Naive thymus-derived CD4-positive, alpha-beta T cell (primary cell): ENCODE measurements at regions of chr7 and their contacts with region 1.

Region 1: DNA sequence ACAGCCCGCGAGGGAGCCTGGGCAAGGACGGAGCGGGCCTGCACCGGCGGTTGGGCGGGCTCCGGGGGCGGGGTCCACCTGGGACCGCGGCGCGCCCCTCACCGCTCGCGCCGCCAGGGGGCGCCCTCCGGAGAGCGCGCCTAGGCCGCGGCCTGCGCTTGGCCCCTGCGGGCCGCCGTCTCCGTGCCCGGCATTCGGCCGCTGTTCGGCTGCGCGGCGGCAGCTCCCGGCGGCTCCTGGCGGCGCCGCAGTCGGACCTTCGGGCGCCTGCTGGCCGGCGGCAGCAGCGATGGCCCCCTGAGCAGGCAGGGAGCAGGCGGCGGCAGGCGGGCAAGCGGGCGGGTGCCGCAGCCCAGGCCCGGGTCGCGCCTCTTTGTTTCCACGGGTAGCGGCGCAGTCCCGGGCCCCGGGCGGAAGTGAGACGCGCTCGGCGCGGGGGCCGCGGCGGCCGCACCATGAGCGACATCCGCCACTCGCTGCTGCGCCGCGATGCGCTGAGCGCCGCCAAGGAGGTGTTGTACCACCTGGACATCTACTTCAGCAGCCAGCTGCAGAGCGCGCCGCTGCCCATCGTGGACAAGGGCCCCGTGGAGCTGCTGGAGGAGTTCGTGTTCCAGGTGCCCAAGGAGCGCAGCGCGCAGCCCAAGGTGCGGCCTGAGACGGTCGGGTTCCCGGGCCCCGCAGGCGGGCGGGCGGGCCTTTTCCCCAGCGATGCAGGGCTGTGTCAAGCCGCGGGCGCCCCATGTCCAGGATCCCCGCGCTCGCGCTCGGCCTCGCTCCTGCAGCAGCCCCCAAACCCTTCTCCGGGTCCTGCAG is at the start of gene INTS15:
- DNase-seq: peak; percentile 72 to 95 (median 92)
- ATAC-seq: peak; percentile 98
- H3K4me3 ChIP-seq: peak within 1 kb of the TSS; percentile 77
- H3K4me3 Mint-ChIP-seq: peak within 1 kb of the TSS; percentile 88 to 98 (median 94)
- H3K27ac ChIP-seq: peak within 1 kb of the TSS; percentile 88
- H3K27ac Mint-ChIP-seq: peak within 1 kb of the TSS; percentile 90 to 97 (median 94)
- H3K4me1 ChIP-seq: peaks cover 14 to 19% of the 10 kb centered on the region in 2 donors
- H3K4me1 Mint-ChIP-seq: peaks cover 10 to 35% (median 18%) of the 10 kb centered on the region in 7 donors
- H3K27me3 ChIP-seq: no peaks in the 10 kb centered on the region
- H3K27me3 Mint-ChIP-seq: no peaks in the 10 kb centered on the region
- total RNA-seq, gene INTS15: 39.9 to 69.1 (median 56.5) TPM

Region 2: DNA sequence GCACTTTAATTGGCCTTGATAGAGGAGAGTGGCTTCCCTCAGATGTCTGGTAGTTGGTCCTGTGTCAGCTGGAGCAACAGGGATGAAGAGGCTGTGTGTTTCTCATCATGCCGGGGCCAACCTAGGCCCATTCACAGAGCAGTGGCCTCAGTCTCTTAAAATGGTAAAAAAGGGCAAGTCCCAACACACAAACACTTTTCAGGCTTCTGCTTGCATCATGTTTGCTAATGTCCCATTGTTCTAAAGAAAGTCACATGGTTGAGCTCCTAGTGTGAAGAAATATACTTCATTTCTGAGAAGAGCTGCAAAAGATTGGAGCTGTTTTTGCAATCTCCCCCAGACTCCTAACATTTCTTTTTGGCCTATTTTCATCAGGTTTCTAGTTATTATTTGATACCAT is 1585.0 kb before region 1 on chr7:
- CTCF ChIA-PET with region 1: no interaction called
- POLR2A ChIA-PET with region 1: no interaction called
- intact Hi-C with region 1: no loop called
- DNase-seq: no peak
- ATAC-seq: no peak
- H3K4me3 ChIP-seq: no peak overlapping the region
- H3K4me3 Mint-ChIP-seq: no peak overlapping the region
- H3K27ac ChIP-seq: no peak overlapping the region
- H3K27ac Mint-ChIP-seq: no peak overlapping the region
- H3K4me1 ChIP-seq: no peaks in the 10 kb centered on the region
- H3K4me1 Mint-ChIP-seq: peaks cover 0 to 6% (median 0%) of the 10 kb centered on the region in 7 donors
- H3K27me3 ChIP-seq: no peaks in the 10 kb centered on the region
- H3K27me3 Mint-ChIP-seq: no peaks in the 10 kb centered on the region

Region 3: DNA sequence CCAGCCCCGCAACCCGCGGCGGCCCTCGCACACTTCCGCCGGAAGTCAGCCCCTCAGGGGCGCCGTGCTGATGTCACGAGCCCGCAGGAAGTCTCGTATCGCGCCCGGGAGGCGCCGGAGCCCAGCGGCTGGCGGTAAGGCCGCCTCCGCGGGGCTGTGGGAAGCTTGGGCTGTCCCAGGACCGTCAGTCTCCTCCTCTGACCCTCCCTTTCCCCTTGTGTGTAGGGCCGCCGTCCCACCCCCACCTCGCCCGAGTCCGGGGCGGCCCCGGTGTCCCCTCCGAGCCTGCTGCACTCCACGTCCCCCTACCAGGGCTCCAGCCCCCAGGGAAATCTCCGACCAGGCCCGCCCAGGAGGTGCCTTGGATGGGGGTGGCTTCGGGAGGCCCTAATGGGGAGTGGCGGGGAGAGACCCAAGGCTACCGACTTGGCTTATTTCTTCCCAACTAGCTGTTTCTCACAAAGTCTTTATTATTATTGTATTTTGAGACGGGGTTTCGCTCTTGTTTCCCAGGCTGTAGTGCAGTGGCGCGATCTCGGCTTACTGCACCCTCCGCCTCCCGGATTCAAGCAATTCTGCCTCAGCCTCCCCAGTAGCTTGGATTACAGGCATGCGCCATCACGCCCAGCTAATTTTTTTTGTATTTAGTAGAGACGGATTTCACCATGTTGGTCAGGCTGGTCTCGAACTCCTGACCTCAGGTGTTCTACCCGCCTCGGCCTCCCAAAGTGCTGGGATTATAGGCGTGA is 12.5 kb before region 1 on chr7 and contains the start of gene ZDHHC4:
- CTCF ChIA-PET with region 1: interaction called, 6 read pairs
- POLR2A ChIA-PET with region 1: interaction called, 14 read pairs
- intact Hi-C with region 1: loop called (anchors 1 kb)
- DNase-seq: peak; percentile 75 to 90 (median 83)
- ATAC-seq: peak; percentile 97
- H3K4me3 ChIP-seq: peak within 1 kb of the TSS; percentile 76
- H3K4me3 Mint-ChIP-seq: peak within 1 kb of the TSS; percentile 83 to 91 (median 89)
- H3K27ac ChIP-seq: peak within 1 kb of the TSS; percentile 99
- H3K27ac Mint-ChIP-seq: peak within 1 kb of the TSS; percentile 83 to 96 (median 93)
- H3K4me1 ChIP-seq: no peaks in the 10 kb centered on the region
- H3K4me1 Mint-ChIP-seq: peaks cover 0 to 29% (median 16%) of the 10 kb centered on the region in 7 donors
- H3K27me3 ChIP-seq: no peaks in the 10 kb centered on the region
- H3K27me3 Mint-ChIP-seq: peaks cover 0 to 3% (median 0%) of the 10 kb centered on the region in 5 donors
- total RNA-seq, gene ZDHHC4: 25.2 to 42.2 (median 31.8) TPM

Region 4: DNA sequence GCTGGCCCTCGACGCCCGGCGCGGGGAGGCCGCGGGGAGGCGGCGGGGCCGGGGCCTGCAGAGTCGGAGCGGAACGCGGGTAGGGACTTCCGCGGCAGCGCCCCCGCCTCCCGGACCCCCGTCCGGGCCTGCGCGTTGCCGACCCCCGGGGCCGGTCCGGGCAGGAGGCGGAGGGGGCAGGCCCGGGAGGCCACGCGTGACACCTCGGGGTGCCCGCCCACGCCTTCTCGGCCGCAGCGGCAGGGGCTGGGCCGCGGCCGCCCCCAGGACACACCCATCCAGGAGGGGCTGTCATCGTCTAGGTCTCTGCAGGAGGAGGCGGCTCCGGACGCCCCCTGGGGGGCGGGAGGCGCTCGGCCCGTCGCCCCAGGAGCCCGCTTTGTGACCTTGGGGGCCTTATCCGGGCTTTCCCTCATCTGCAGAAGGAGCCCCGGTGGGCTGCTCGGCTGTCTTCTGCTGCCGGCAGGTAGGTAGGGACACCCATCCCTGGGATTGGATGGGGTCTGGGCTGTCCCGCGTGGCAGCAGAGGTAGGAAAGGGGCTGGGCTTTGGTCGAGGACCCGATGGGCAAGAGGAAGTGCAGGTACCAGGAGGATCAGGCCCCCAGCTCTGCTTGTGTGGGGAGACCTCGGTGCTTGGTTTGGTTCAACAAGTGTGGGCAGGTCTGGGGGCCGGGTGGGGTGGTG is 47.6 kb after region 1 on chr7:
- CTCF ChIA-PET with region 1: no interaction called
- POLR2A ChIA-PET with region 1: interaction called, 5 read pairs
- intact Hi-C with region 1: loop called (anchors 1 kb)
- DNase-seq: peak; percentile 23 to 72 (median 42)
- ATAC-seq: peak; percentile 73
- H3K4me3 ChIP-seq: peak overlapping the region; percentile 52
- H3K4me3 Mint-ChIP-seq: peak overlapping the region; percentile 81 to 90 (median 87)
- H3K27ac ChIP-seq: peak overlapping the region; percentile 76
- H3K27ac Mint-ChIP-seq: peak overlapping the region; percentile 76 to 95 (median 87)
- H3K4me1 ChIP-seq: peaks cover 10 to 14% of the 10 kb centered on the region in 2 donors
- H3K4me1 Mint-ChIP-seq: peaks cover 24 to 32% (median 27%) of the 10 kb centered on the region in 7 donors
- H3K27me3 ChIP-seq: no peaks in the 10 kb centered on the region
- H3K27me3 Mint-ChIP-seq: no peaks in the 10 kb centered on the region

Region 5: DNA sequence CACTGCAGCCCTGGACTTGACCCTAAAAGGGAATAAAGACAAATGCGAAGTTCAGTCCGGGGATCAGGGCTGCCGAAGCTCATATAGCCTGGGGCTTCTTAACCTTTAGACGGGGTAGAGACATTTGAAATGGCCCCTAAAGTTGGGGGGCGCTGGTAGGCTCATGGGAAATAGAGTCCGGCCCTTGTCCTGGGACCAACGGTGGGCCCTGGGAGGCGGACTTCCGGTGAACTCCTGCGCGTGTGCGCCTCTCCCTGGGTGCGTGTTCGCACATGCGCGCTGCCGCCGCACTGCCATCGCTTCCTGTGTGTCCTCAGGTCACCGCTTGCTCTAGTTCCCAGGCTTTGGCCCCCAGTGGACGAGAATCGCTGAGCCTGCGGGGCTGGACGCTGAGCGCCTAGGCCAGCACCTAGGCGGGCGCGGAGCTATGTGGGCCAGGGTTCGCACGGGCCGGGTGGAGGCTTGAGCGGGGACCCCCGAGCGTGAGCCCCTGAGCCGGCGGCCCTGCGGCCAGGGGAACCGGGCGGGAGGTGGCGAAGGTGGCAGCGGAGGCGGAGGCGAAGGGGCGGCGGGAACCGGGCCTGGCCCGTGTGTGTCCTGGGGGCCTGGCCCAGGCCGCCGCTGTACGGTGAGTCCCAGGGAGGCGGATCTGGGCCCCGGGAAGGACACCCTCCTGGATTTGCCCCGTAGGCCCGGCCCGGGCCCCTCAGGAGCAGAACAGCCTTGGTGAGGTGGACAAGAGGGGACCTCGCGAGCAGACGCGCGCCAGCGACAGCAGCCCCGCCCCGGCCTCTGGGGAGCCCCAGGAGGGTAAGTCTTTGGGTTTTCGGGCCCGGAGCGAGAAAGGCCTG is 139.7 kb after region 1 on chr7:
- CTCF ChIA-PET with region 1: no interaction called
- POLR2A ChIA-PET with region 1: no interaction called
- intact Hi-C with region 1: loop called (anchors 1 to 2 kb)
- DNase-seq: peak; percentile 68 to 84 (median 76)
- ATAC-seq: peak; percentile 97
- H3K4me3 ChIP-seq: peak overlapping the region; percentile 73
- H3K4me3 Mint-ChIP-seq: peak overlapping the region; percentile 91 to 99 (median 94)
- H3K27ac ChIP-seq: peak overlapping the region; percentile 91
- H3K27ac Mint-ChIP-seq: peak overlapping the region; percentile 88 to 96 (median 92)
- H3K4me1 ChIP-seq: peaks cover 4 to 8% of the 10 kb centered on the region in 2 donors
- H3K4me1 Mint-ChIP-seq: peaks cover 13 to 42% (median 26%) of the 10 kb centered on the region in 7 donors
- H3K27me3 ChIP-seq: no peaks in the 10 kb centered on the region
- H3K27me3 Mint-ChIP-seq: peaks cover 0 to 4% (median 0%) of the 10 kb centered on the region in 5 donors